ENCODE measurements at regions of chr12 and their contacts with region 1.

Region 1: DNA sequence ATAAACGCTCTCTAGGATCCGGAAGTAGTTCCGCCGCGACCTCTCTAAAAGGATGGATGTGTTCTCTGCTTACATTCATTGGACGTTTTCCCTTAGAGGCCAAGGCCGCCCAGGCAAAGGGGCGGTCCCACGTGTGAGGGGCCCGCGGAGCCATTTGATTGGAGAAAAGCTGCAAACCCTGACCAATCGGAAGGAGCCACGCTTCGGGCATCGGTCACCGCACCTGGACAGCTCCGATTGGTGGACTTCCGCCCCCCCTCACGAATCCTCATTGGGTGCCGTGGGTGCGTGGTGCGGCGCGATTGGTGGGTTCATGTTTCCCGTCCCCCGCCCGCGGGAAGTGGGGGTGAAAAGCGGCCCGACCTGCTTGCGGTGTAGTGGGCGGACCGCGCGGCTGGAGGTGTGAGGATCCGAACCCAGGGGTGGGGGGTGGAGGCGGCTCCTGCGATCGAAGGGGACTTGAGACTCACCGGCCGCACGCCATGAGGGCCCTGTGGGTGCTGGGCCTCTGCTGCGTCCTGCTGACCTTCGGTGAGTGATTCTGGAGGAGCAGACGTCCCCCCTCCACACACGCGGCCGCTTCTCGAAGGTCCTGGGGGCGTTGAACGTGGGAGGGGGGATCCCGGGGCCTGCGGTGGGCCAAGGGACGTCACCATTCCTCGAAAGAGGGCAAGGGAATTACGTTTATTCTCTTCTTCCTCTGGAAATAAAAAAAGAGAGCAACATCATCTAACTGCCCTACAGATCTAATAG is at the start of gene HSP90B1:
- DNase-seq: peak; percentile 99 to 100 (median 100)
- H3K4me3 ChIP-seq: peak within 1 kb of the TSS; percentile 87
- H3K4me3 Mint-ChIP-seq: peak within 1 kb of the TSS; percentile 87 to 96 (median 91)
- H3K27ac ChIP-seq: peak within 1 kb of the TSS; percentile 99
- H3K27ac Mint-ChIP-seq: peak within 1 kb of the TSS; percentile 99 to 100 (median 100)
- H3K4me1 ChIP-seq: peaks cover 61% of the 10 kb centered on the region
- H3K4me1 Mint-ChIP-seq: peaks cover 42 to 83% (median 54%) of the 10 kb centered on the region in 4 donors
- H3K27me3 ChIP-seq: no peaks in the 10 kb centered on the region
- H3K27me3 Mint-ChIP-seq: peaks cover 0 to 3% of the 10 kb centered on the region in 2 donors
- total RNA-seq, gene HSP90B1: 515 to 534 TPM

Region 2: GRCh38 chr12:102479099-102479887 is 1450.9 kb before region 1 on chr12:
- CTCF ChIA-PET with region 1: no interaction called
- POLR2A ChIA-PET with region 1: no interaction called
- intact Hi-C with region 1: no loop called
- DNase-seq: no peak
- H3K4me3 ChIP-seq: no peak overlapping the region
- H3K4me3 Mint-ChIP-seq: no peak overlapping the region
- H3K27ac ChIP-seq: no peak overlapping the region
- H3K27ac Mint-ChIP-seq: no peak overlapping the region
- H3K4me1 ChIP-seq: peaks cover 9% of the 10 kb centered on the region
- H3K4me1 Mint-ChIP-seq: peaks cover 2 to 7% (median 2%) of the 10 kb centered on the region in 4 donors
- H3K27me3 ChIP-seq: no peaks in the 10 kb centered on the region
- H3K27me3 Mint-ChIP-seq: peaks cover 6 to 9% of the 10 kb centered on the region in 2 donors

Region 3: GRCh38 chr12:103806803-103807202 is 123.4 kb before region 1 on chr12:
- CTCF ChIA-PET with region 1: no interaction called
- POLR2A ChIA-PET with region 1: no interaction called
- intact Hi-C with region 1: no loop called
- DNase-seq: no peak
- H3K4me3 ChIP-seq: no peak overlapping the region
- H3K4me3 Mint-ChIP-seq: no peak overlapping the region
- H3K27ac ChIP-seq: no peak overlapping the region
- H3K27ac Mint-ChIP-seq: no peak overlapping the region
- H3K4me1 ChIP-seq: no peaks in the 10 kb centered on the region
- H3K4me1 Mint-ChIP-seq: peaks cover 0 to 1% (median 0%) of the 10 kb centered on the region in 4 donors
- H3K27me3 ChIP-seq: no peaks in the 10 kb centered on the region
- H3K27me3 Mint-ChIP-seq: no peaks in the 10 kb centered on the region

Region 4: GRCh38 chr12:103877934-103878510 is 52.2 kb before region 1 on chr12:
- CTCF ChIA-PET with region 1: interaction called, 12 read pairs
- POLR2A ChIA-PET with region 1: interaction called, 9 read pairs
- intact Hi-C with region 1: loop called (anchors 1 kb)
- DNase-seq: peak; percentile 51 to 61 (median 60)
- H3K4me3 ChIP-seq: no peak overlapping the region
- H3K4me3 Mint-ChIP-seq: peak overlapping the region in 3 of 8 donors; percentile 8 to 62 (median 20)
- H3K27ac ChIP-seq: no peak overlapping the region
- H3K27ac Mint-ChIP-seq: peak overlapping the region in 3 of 7 donors; percentile 23 to 77 (median 76)
- H3K4me1 ChIP-seq: peaks cover 7% of the 10 kb centered on the region
- H3K4me1 Mint-ChIP-seq: peaks cover 3 to 27% (median 14%) of the 10 kb centered on the region in 4 donors
- H3K27me3 ChIP-seq: no peaks in the 10 kb centered on the region
- H3K27me3 Mint-ChIP-seq: no peaks in the 10 kb centered on the region

Region 5: DNA sequence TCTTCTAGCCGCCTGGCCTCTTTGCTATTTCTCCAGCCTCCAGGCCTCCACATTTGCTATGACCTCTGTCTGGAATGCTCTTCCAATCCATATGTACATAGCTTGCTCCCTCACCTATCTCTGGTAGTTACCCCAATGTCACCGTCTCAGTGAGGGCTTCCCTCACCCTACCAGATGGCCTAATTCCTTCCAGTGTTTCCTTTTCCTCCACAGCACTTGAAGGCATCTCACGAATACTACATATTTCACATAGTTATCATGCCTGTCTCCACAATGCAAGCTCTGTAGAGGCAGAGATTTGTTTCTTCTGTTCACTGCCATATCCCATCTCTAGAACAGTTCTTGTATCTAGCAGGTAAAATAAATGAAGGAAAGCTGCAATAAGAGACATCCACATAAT is 21.3 kb before region 1 on chr12:
- CTCF ChIA-PET with region 1: interaction called, 3 read pairs
- POLR2A ChIA-PET with region 1: interaction called, 98 read pairs
- intact Hi-C with region 1: no loop called
- DNase-seq: no peak
- H3K4me3 ChIP-seq: no peak overlapping the region
- H3K4me3 Mint-ChIP-seq: peak overlapping the region in 1 of 8 donors; percentile 25
- H3K27ac ChIP-seq: no peak overlapping the region
- H3K27ac Mint-ChIP-seq: peak overlapping the region in 2 of 7 donors; percentile 47 to 67
- H3K4me1 ChIP-seq: peaks cover 19% of the 10 kb centered on the region
- H3K4me1 Mint-ChIP-seq: peaks cover 22 to 40% (median 29%) of the 10 kb centered on the region in 4 donors
- H3K27me3 ChIP-seq: no peaks in the 10 kb centered on the region
- H3K27me3 Mint-ChIP-seq: peaks cover 0 to 3% of the 10 kb centered on the region in 2 donors

Region 6: GRCh38 chr12:103965590-103966504 is 35.6 kb after region 1 on chr12 and contains the start of gene TDG:
- CTCF ChIA-PET with region 1: interaction called, 10 read pairs
- POLR2A ChIA-PET with region 1: interaction called, 139 read pairs
- intact Hi-C with region 1: loop called (anchors 1 kb)
- DNase-seq: peak; percentile 93 to 99 (median 96)
- H3K4me3 ChIP-seq: peak within 1 kb of the TSS; percentile 65 to 99
- H3K4me3 Mint-ChIP-seq: peak within 1 kb of the TSS; percentile 98 to 99 (median 98)
- H3K27ac ChIP-seq: peak within 1 kb of the TSS; percentile 84
- H3K27ac Mint-ChIP-seq: peak within 1 kb of the TSS; percentile 97 to 100 (median 99)
- H3K4me1 ChIP-seq: peaks cover 56% of the 10 kb centered on the region
- H3K4me1 Mint-ChIP-seq: peaks cover 28 to 67% (median 54%) of the 10 kb centered on the region in 4 donors
- H3K27me3 ChIP-seq: no peaks in the 10 kb centered on the region
- H3K27me3 Mint-ChIP-seq: no peaks in the 10 kb centered on the region
- total RNA-seq, gene TDG: 35.1 to 38.3 TPM

Region 7: GRCh38 chr12:104108755-104109445 is 178.7 kb after region 1 on chr12:
- CTCF ChIA-PET with region 1: interaction called, 6 read pairs
- POLR2A ChIA-PET with region 1: interaction called, 6 read pairs
- intact Hi-C with region 1: loop called (anchors 1 kb)
- DNase-seq: peak; percentile 76 to 85 (median 77)
- H3K4me3 ChIP-seq: no peak overlapping the region
- H3K4me3 Mint-ChIP-seq: no peak overlapping the region
- H3K27ac ChIP-seq: no peak overlapping the region
- H3K27ac Mint-ChIP-seq: peak overlapping the region in 3 of 7 donors; percentile 47 to 80 (median 49)
- H3K4me1 ChIP-seq: peaks cover 6% of the 10 kb centered on the region
- H3K4me1 Mint-ChIP-seq: peaks cover 10 to 17% (median 12%) of the 10 kb centered on the region in 4 donors
- H3K27me3 ChIP-seq: no peaks in the 10 kb centered on the region
- H3K27me3 Mint-ChIP-seq: no peaks in the 10 kb centered on the region

Region 8: DNA sequence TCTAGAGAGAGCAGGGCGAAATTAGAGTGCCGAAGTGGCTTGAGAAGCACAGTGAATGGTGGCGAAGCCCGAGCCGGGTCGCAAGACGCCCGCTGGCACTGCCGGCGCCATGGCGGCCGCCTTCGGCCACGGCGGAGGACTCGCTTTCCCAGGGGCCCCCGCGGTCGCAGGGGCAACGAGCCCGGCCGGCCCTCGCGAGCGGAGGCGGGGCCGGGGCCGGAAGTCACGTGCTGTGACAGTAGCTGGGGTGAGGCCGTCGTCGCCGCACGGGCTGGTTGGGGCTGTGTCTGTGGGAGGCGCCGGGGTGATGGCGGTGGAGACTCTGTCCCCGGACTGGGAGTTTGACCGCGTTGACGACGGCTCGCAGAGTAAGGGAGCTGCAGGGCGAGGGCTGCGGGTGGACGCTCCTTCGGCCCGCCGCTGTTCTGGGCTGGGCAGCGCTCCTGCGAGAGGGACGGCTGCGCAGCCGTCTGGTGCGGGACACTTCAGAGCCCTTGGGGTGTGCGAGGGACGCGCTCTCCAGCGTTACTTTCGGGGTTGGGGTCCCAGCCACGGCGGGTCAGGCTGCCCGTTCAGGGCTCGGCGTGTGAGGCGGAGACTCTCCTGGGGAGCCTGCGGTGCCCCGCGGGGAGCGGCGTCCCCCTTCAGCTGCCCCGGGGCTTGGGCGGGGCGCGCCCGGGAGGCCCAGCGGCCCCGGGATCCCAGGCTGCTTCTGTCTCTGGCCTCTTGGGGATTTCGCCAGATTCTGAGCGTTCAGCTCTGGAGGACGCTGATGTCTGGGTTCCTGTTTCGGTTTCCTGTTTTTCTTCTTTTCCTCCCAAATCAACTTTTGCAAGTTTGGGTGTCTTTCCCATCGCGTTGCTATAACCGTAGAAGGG is 1177.5 kb after region 1 on chr12 and contains the start of gene WASHC4:
- CTCF ChIA-PET with region 1: no interaction called
- POLR2A ChIA-PET with region 1: interaction called, 6 read pairs
- intact Hi-C with region 1: loop called (anchors 5 kb)
- DNase-seq: peak; percentile 90 to 92 (median 92)
- H3K4me3 ChIP-seq: peak within 1 kb of the TSS; percentile 72 to 74
- H3K4me3 Mint-ChIP-seq: peak within 1 kb of the TSS; percentile 92 to 98 (median 97)
- H3K27ac ChIP-seq: peak within 1 kb of the TSS; percentile 92
- H3K27ac Mint-ChIP-seq: peak within 1 kb of the TSS; percentile 82 to 98 (median 96)
- H3K4me1 ChIP-seq: peaks cover 42% of the 10 kb centered on the region
- H3K4me1 Mint-ChIP-seq: peaks cover 28 to 49% (median 34%) of the 10 kb centered on the region in 4 donors
- H3K27me3 ChIP-seq: no peaks in the 10 kb centered on the region
- H3K27me3 Mint-ChIP-seq: peaks cover 14 to 19% of the 10 kb centered on the region in 2 donors
- total RNA-seq, gene WASHC4: 71.4 to 75.4 TPM

Measured in CD4-positive, alpha-beta memory T cell (primary cell).